ENCODE measurements at regions of chr15 and their contacts with region 1.

Region 1: GRCh38 chr15:75738647-75739331 is 26.1 kb upstream of the CSPG4 start:
- DNase-seq: peak; percentile 70 to 92 (median 89)
- ATAC-seq: peak; percentile 91
- H3K4me3 ChIP-seq: peak overlapping the region; percentile 67 to 79
- H3K4me3 Mint-ChIP-seq: peak overlapping the region; percentile 84
- H3K27ac ChIP-seq: peak overlapping the region in 1 of 2 experiments; percentile 51
- H3K27ac Mint-ChIP-seq: peak overlapping the region; percentile 70
- H3K4me1 ChIP-seq: peaks cover 14% of the 10 kb centered on the region
- H3K4me1 Mint-ChIP-seq: peaks cover 14% of the 10 kb centered on the region
- H3K27me3 ChIP-seq: peaks cover 0 to 4% of the 10 kb centered on the region in 2 experiments
- H3K27me3 Mint-ChIP-seq: peaks cover 3% of the 10 kb centered on the region
- CTCF ChIP-seq: no peak

Region 2: DNA sequence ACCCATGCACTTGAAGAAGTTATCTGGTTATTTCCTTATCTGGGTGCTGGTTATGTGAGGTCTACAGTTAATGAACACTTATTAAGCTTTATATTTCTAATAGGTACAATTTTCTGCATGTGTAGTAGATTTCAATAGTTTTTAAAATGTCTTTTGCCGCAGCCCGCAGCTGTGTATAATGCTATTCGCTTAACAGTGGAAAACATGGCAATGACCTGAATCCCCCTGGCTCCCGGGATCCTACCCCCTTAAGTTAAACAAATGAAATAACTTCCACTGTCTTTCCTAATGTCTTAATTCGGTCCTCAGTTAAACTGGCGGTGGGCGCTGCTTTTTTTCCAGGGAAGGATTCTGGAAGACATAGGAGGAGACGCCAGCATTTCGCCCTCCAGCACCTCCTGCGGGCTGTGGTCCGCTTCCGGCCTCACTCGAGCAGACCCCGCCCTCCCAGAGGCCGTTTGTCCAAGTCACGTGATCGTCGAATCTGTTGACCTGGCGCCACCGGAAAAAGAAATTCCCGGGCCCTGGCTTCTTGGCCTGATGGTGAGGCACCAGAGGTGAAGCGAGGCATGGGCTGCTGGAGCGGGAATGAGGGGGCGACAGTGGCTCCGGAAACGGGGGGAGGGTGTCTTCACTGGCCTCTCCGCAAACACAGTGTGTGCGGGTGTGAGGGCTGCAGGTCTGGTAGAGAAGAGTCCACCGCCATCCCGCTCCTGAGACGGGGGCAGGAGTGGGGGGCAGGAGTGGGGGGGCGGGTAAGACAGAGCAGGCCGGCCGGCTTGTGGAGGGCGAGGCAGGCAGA is 19.5 kb after region 1 on chr15:
- CTCF ChIA-PET with region 1: no interaction called
- POLR2A ChIA-PET with region 1: interaction called, 7 read pairs
- intact Hi-C with region 1: loop called in 1 of 2 experiments (anchors 1 kb)
- DNase-seq: peak in 8 of 9 experiments; percentile 29 to 80 (median 52)
- ATAC-seq: peak; percentile 66
- H3K4me3 ChIP-seq: peak overlapping the region; percentile 61 to 73
- H3K4me3 Mint-ChIP-seq: peak overlapping the region; percentile 82
- H3K27ac ChIP-seq: peak overlapping the region; percentile 26 to 58
- H3K27ac Mint-ChIP-seq: peak overlapping the region; percentile 67
- H3K4me1 ChIP-seq: no peaks in the 10 kb centered on the region
- H3K4me1 Mint-ChIP-seq: peaks cover 17% of the 10 kb centered on the region
- H3K27me3 ChIP-seq: no peaks in the 10 kb centered on the region
- H3K27me3 Mint-ChIP-seq: no peaks in the 10 kb centered on the region
- CTCF ChIP-seq: no peak

Region 3: GRCh38 chr15:75903331-75904239 is 164.8 kb after region 1 on chr15 and contains the start of gene FBXO22:
- CTCF ChIA-PET with region 1: no interaction called
- POLR2A ChIA-PET with region 1: no interaction called
- intact Hi-C with region 1: loop called in 1 of 2 experiments (anchors 5 kb)
- DNase-seq: peak; percentile 78 to 93 (median 88)
- ATAC-seq: peak; percentile 90
- H3K4me3 ChIP-seq: peak within 1 kb of the TSS; percentile 83 to 84
- H3K4me3 Mint-ChIP-seq: peak within 1 kb of the TSS; percentile 98
- H3K27ac ChIP-seq: peak within 1 kb of the TSS; percentile 63 to 68
- H3K27ac Mint-ChIP-seq: peak within 1 kb of the TSS; percentile 95
- H3K4me1 ChIP-seq: peaks cover 19% of the 10 kb centered on the region
- H3K4me1 Mint-ChIP-seq: peaks cover 49% of the 10 kb centered on the region
- H3K27me3 ChIP-seq: no peaks in the 10 kb centered on the region
- H3K27me3 Mint-ChIP-seq: no peaks in the 10 kb centered on the region
- CTCF ChIP-seq: no peak
- total RNA-seq, gene FBXO22: 6.1 to 6.4 TPM